Lower lobe of right lung (tissue), 2 donors: ENCODE measurements at regions of chr17 and their contacts with region 1.

Region 1: GRCh38 chr17:40287494-40288369 is at the start of gene CDC6:
- DNase-seq: peak; percentile 99
- ATAC-seq: peak; percentile 97 to 98
- H3K4me3 ChIP-seq: peak within 1 kb of the TSS; percentile 64
- H3K27ac ChIP-seq: peak within 1 kb of the TSS; percentile 5
- H3K4me1 ChIP-seq: peaks cover 33% of the 10 kb centered on the region
- H3K27me3 ChIP-seq: no peaks in the 10 kb centered on the region
- CTCF ChIP-seq: no peak
- total RNA-seq, gene CDC6: 2.3 TPM

Region 2: DNA sequence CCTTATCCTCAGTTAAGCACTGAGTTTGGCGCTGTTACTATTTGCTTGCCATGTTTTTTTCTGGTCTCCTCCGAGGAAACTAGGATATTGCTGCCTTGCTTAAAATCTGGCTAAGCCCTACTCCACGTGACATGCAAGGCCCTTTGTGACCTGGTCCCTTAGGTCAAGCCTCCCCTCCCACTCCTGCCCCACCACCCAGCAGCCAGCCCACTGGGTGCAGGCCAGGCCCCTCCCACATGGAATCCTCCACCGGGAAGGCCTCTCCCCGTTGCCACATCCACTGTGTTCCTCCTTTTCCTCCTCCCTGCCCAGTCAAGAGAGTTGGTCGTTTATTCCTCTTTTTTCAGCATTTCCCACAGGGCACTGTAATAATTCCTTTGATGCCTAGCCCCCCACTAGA is 290.9 kb before region 1 on chr17:
- intact Hi-C with region 1: no loop called
- DNase-seq: no peak
- ATAC-seq: peak; percentile 29 to 59
- H3K4me3 ChIP-seq: no peak overlapping the region
- H3K27ac ChIP-seq: no peak overlapping the region
- H3K4me1 ChIP-seq: no peaks in the 10 kb centered on the region
- H3K27me3 ChIP-seq: no peaks in the 10 kb centered on the region
- CTCF ChIP-seq: no peak

Region 3: GRCh38 chr17:40191237-40192208 is 96.2 kb before region 1 on chr17:
- intact Hi-C with region 1: loop called (anchors 10 kb)
- DNase-seq: peak; percentile 78
- ATAC-seq: peak; percentile 89 to 91
- H3K4me3 ChIP-seq: peak overlapping the region; percentile 70
- H3K27ac ChIP-seq: peak overlapping the region; percentile 46
- H3K4me1 ChIP-seq: peaks cover 14% of the 10 kb centered on the region
- H3K27me3 ChIP-seq: no peaks in the 10 kb centered on the region
- CTCF ChIP-seq: peak; percentile 73

Region 4: GRCh38 chr17:40224718-40225550 is 62.8 kb before region 1 on chr17:
- intact Hi-C with region 1: loop called (anchors 10 kb)
- DNase-seq: no peak
- ATAC-seq: peak; percentile 64 to 81
- H3K4me3 ChIP-seq: no peak overlapping the region
- H3K27ac ChIP-seq: peak overlapping the region; percentile 38
- H3K4me1 ChIP-seq: peaks cover 36% of the 10 kb centered on the region
- H3K27me3 ChIP-seq: no peaks in the 10 kb centered on the region
- CTCF ChIP-seq: no peak

Region 5: DNA sequence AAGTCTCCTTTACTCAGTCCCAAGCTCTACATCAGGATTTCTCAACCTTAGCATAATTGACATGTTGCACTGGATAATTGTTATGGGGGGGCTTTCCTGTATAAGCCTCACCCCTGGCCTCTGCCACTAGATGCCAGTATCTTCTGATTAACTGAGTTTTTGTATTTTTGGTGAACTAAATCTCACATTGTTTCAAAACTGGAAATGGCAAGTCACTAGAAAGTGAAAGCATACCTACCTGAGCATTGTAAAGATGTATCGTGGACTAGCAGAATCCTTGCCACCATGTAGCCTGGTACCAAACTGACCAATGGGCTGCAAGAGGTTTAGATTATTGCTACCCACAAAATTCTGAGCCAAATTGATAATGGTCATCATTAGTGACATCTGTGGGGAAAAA is 114.9 kb after region 1 on chr17:
- intact Hi-C with region 1: no loop called
- DNase-seq: no peak
- ATAC-seq: no peak
- H3K4me3 ChIP-seq: no peak overlapping the region
- H3K27ac ChIP-seq: no peak overlapping the region
- H3K4me1 ChIP-seq: no peaks in the 10 kb centered on the region
- H3K27me3 ChIP-seq: no peaks in the 10 kb centered on the region
- CTCF ChIP-seq: no peak